MCF 10A (cell line): ENCODE measurements at regions of chr17 and their contacts with region 1.

Region 1: DNA sequence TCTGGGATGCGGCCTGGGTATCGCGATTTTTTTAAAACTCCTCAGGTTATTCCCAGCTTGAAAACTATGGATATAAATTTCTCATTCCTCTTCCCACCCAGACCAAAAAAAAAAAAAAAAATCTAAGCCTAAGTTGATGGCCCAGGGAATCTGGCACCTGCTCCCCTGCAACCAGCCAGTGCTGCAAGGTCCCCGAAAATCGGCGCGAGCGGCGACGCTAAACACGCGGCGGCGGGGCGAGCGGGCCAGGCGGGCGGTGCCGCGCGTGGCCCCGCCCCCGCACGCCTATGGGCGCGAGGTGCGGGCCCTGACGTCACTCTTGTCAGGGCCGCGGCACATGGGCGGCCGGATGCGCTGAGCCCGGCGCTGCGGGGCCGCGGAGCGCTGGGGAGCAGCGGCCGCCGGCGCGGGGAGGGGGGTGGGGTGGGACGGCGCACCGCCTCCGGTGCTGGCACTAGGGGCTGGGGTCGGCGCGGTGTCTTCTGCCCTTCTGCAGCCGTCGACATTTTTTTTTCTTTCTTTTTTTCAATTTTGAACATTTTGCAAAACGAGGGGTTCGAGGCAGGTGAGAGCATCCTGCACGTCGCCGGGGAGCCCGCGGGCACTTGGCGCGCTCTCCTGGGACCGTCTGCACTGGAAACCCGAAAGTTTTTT is at the start of gene HLF:
- DNase-seq: peak; percentile 47
- H3K4me3 Mint-ChIP-seq: peak within 1 kb of the TSS; percentile 19
- H3K27ac Mint-ChIP-seq: no peak within 1 kb of the TSS
- H3K4me1 Mint-ChIP-seq: no peaks in the 10 kb centered on the region
- H3K27me3 Mint-ChIP-seq: no peaks in the 10 kb centered on the region
- CTCF ChIP-seq: no peak
- total RNA-seq, gene HLF: 0.23 and 0.66 TPM in 2 replicates

Region 2: DNA sequence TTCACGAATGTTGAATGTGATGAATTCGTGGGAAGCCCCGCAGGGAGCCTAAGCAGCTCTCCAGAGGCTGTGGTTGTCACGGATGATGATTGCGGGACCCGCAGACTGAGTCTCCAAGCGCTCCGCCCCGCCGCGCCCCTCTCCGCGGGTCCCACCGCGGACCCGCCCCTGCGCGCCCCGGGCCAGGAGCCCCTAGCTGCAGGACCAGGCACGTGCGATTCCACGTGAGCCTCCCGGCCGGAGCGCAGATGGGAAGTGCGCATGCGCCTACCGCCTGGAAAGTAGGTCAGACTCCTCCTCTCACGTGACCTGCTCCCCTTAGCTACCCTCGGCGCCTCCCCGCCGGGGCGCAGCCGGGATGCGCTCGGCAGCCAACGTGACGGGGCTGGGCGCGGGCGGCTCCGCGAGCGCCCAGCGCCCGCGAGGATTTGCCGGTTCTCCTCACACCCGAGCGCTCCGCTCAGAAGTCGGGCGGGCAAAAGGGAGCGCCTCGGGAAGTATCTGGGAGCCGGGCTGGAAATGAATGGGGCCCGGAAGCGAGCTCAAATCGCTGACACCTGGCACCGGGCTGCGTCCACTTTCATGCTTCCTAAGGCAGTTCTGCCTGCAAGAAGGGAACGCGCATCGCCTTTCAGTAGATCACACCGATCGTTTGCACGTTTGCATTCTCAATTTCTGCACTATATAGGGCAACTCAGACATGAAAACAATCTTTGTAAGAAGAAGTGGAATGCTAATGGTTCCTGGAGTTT is 26.4 kb before region 1 on chr17:
- CTCF ChIA-PET with region 1: no interaction called
- POLR2A ChIA-PET with region 1: no interaction called
- intact Hi-C with region 1: loop called (anchors 2 kb)
- DNase-seq: peak; percentile 93
- H3K4me3 Mint-ChIP-seq: peak overlapping the region; percentile 76
- H3K27ac Mint-ChIP-seq: no peak overlapping the region
- H3K4me1 Mint-ChIP-seq: peaks cover 18% of the 10 kb centered on the region
- H3K27me3 Mint-ChIP-seq: no peaks in the 10 kb centered on the region
- CTCF ChIP-seq: no peak

Region 3: GRCh38 chr17:55452139-55452790 is 187.5 kb after region 1 on chr17:
- CTCF ChIA-PET with region 1: no interaction called
- POLR2A ChIA-PET with region 1: no interaction called
- intact Hi-C with region 1: no loop called
- DNase-seq: peak; percentile 58
- H3K4me3 Mint-ChIP-seq: no peak overlapping the region
- H3K27ac Mint-ChIP-seq: peak overlapping the region; percentile 36
- H3K4me1 Mint-ChIP-seq: peaks cover 30% of the 10 kb centered on the region
- H3K27me3 Mint-ChIP-seq: no peaks in the 10 kb centered on the region
- CTCF ChIP-seq: no peak